ENCODE measurements at regions of chr4 and their contacts with region 1.

Region 1: DNA sequence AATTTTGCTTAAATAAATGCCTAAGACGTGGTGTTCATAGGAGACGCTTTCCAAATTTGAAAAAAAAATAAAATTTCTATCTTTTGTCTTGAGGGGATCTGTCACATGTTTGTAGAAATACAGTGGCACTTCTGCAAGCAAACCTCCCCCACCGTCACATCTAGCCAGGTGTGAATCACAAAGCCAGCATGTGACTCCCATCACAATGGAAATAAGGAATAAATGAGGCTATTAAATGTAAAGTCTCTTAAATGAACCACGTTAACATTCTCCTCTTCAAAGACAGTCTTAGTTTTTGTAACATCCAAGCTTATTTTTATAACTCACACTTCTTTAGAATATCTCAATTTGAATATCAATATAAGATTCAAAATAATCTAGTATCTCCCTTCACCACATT is 63.0 kb upstream of the CCSER1 start:
- DNase-seq: no peak
- ATAC-seq: no peak
- H3K4me3 ChIP-seq: no peak overlapping the region
- H3K27ac ChIP-seq: no peak overlapping the region
- H3K4me1 ChIP-seq: no peaks in the 10 kb centered on the region
- H3K27me3 ChIP-seq: no peaks in the 10 kb centered on the region
- CTCF ChIP-seq: no peak
- EP300 ChIP-seq: no peak
- POLR2A ChIP-seq: no peak
- RAD21 ChIP-seq: no peak

Region 2: GRCh38 chr4:90051999-90052398 is 12.2 kb before region 1 on chr4:
- CTCF ChIA-PET with region 1: no interaction called
- POLR2A ChIA-PET with region 1: no interaction called
- RAD21 ChIA-PET with region 1: no interaction called
- SMC1A ChIA-PET with region 1: interaction called, 10 read pairs
- in situ Hi-C with region 1: no loop called
- intact Hi-C with region 1: no loop called
- DNase-seq: no peak
- ATAC-seq: no peak
- H3K4me3 ChIP-seq: no peak overlapping the region
- H3K27ac ChIP-seq: no peak overlapping the region
- H3K4me1 ChIP-seq: no peaks in the 10 kb centered on the region
- H3K27me3 ChIP-seq: no peaks in the 10 kb centered on the region
- CTCF ChIP-seq: no peak
- EP300 ChIP-seq: no peak
- POLR2A ChIP-seq: no peak
- RAD21 ChIP-seq: no peak

Measured in GM12878 (cell line).